ENCODE measurements at regions of chr11 and their contacts with region 1.

Region 1: GRCh38 chr11:102317099-102317767 is at the start of gene BIRC3:
- DNase-seq: peak; percentile 76 to 99 (median 88)
- ATAC-seq: peak; percentile 85
- H3K4me3 ChIP-seq: peak within 1 kb of the TSS; percentile 68 to 80
- H3K4me3 Mint-ChIP-seq: peak within 1 kb of the TSS; percentile 90
- H3K27ac ChIP-seq: peak within 1 kb of the TSS; percentile 82 to 95
- H3K27ac Mint-ChIP-seq: peak within 1 kb of the TSS; percentile 97
- H3K4me1 ChIP-seq: peaks cover 57% of the 10 kb centered on the region
- H3K4me1 Mint-ChIP-seq: peaks cover 79% of the 10 kb centered on the region
- H3K27me3 ChIP-seq: no peaks in the 10 kb centered on the region
- H3K27me3 Mint-ChIP-seq: no peaks in the 10 kb centered on the region
- CTCF ChIP-seq: no peak
- total RNA-seq, gene BIRC3: 88.0 to 90.4 TPM

Region 2: DNA sequence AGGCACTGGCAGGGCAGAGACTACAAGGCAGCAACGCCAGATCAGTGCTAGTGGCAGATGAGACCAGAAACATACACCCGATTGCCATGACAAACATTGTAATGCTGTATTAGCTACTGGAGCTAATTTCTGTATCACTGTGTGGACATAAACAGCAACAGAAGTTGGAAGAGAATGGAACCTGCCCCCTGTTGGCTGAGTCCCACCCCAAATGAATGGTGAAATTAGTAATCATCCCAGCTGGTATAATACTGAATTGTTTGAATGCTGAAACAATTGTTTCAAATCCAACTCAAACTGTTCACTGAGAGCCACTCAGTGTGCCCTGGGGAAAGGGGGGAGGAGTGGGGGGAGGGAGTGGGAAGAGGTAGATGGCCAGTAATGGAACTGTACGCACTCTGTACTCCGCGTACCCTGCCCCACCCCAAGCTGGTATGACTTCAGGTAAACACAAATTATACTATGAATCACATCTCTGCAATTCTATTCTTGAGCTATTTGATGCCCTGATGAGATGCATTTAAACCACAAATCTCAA is 11.1 kb before region 1 on chr11:
- CTCF ChIA-PET with region 1: interaction called, 384 read pairs
- POLR2A ChIA-PET with region 1: interaction called, 16 read pairs
- intact Hi-C with region 1: loop called in 1 of 2 experiments (anchors 1 kb)
- DNase-seq: peak in 2 of 9 experiments; percentile 38 to 53
- ATAC-seq: peak; percentile 55
- H3K4me3 ChIP-seq: no peak overlapping the region
- H3K4me3 Mint-ChIP-seq: peak overlapping the region; percentile 40
- H3K27ac ChIP-seq: peak overlapping the region; percentile 33 to 62
- H3K27ac Mint-ChIP-seq: peak overlapping the region; percentile 91
- H3K4me1 ChIP-seq: peaks cover 56% of the 10 kb centered on the region
- H3K4me1 Mint-ChIP-seq: peaks cover 60% of the 10 kb centered on the region
- H3K27me3 ChIP-seq: no peaks in the 10 kb centered on the region
- H3K27me3 Mint-ChIP-seq: no peaks in the 10 kb centered on the region
- CTCF ChIP-seq: no peak

Region 3: GRCh38 chr11:103091801-103092524 is 774.7 kb after region 1 on chr11 and contains the start of gene DCUN1D5:
- CTCF ChIA-PET with region 1: no interaction called
- POLR2A ChIA-PET with region 1: no interaction called
- intact Hi-C with region 1: loop called in 1 of 2 experiments (anchors 10 kb)
- DNase-seq: peak; percentile 88 to 97 (median 95)
- ATAC-seq: peak; percentile 94
- H3K4me3 ChIP-seq: peak within 1 kb of the TSS; percentile 84 to 91
- H3K4me3 Mint-ChIP-seq: peak within 1 kb of the TSS; percentile 84
- H3K27ac ChIP-seq: peak within 1 kb of the TSS; percentile 81 to 86
- H3K27ac Mint-ChIP-seq: peak within 1 kb of the TSS; percentile 95
- H3K4me1 ChIP-seq: peaks cover 25% of the 10 kb centered on the region
- H3K4me1 Mint-ChIP-seq: peaks cover 30% of the 10 kb centered on the region
- H3K27me3 ChIP-seq: peaks cover 0 to 2% of the 10 kb centered on the region in 2 experiments
- H3K27me3 Mint-ChIP-seq: peaks cover 20% of the 10 kb centered on the region
- CTCF ChIP-seq: no peak
- total RNA-seq, gene DCUN1D5: 17.8 to 19.5 TPM

Measured in CD8-positive, alpha-beta T cell (primary cell).